PC-3 (cell line): ENCODE measurements at regions of chr13 and their contacts with region 1.

Region 1: DNA sequence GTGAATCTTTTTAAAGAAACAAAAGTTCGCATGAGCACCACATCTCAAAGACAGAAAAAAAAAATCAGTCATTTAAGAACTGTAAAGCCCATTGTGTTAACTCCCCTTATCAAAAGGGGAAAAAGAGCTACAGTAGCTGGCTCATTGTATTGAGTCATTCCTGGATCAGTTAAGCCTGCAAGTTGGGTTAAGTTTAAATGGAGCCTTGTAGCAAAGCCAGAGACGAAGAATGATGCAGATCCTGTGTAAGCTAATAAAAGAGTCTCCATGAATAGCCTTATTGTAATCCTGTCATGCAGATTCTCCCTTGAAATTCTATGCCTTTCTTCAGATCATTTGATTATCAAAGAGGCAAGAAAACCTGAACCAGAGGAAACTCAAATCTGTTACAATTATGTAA is 83.8 kb downstream of the CRYL1 start:
- DNase-seq: peak; percentile 95
- ATAC-seq: peak; percentile 94
- H3K4me3 ChIP-seq: peak overlapping the region; percentile 17; the same call in 1 of the 2 replicates
- H3K27ac ChIP-seq: peak overlapping the region; percentile 95
- H3K4me1 ChIP-seq: peaks cover 31% of the 10 kb centered on the region
- H3K27me3 ChIP-seq: no peaks in the 10 kb centered on the region
- CTCF ChIP-seq: no peak

Region 2: GRCh38 chr13:20418953-20419352 is 22.9 kb before region 1 on chr13:
- CTCF ChIA-PET with region 1: interaction called, 5 read pairs
- POLR2A ChIA-PET with region 1: no interaction called
- intact Hi-C with region 1: loop called (anchors 1 kb)
- DNase-seq: no peak
- ATAC-seq: no peak
- H3K4me3 ChIP-seq: no peak overlapping the region
- H3K27ac ChIP-seq: peak overlapping the region; percentile 86
- H3K4me1 ChIP-seq: peaks cover 21% of the 10 kb centered on the region
- H3K27me3 ChIP-seq: no peaks in the 10 kb centered on the region
- CTCF ChIP-seq: no peak

Region 3: DNA sequence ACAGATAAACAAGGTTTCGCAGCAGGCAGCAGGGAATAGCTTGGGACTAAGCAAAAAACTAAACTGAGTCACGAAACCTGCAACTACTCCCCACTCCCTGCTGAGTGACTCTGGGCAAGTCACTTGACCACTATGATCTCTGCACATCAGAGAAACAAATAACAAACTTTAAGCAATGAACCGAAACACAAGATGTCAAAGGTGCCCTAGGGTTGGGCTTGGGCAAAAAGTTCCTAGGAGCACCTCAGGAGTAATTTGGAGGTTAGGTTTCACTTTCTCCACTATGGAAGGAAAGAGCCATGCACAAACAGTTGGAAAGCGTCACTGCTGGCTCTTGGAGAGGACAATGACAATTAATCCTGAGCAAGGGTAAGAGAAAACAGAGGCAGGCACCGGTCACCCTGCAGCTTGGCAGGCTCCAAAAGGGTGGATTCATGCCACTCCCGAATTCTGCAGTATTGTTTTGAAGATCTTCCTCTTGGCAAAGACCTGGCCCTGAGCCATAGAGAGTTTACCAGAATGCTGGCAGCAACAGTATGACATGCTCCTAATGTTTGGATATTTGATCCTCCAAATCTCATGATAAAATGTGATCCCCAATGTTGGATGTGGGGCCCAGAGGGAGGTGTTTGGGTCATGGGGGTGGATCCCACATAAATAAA is 23.5 kb after region 1 on chr13:
- CTCF ChIA-PET with region 1: no interaction called
- POLR2A ChIA-PET with region 1: no interaction called
- intact Hi-C with region 1: loop called (anchors 2 kb)
- DNase-seq: peak; percentile 75
- ATAC-seq: peak; percentile 80
- H3K4me3 ChIP-seq: peak overlapping the region; percentile 17; the same call in 1 of the 2 replicates
- H3K27ac ChIP-seq: no peak overlapping the region
- H3K4me1 ChIP-seq: peaks cover 23% of the 10 kb centered on the region
- H3K27me3 ChIP-seq: no peaks in the 10 kb centered on the region
- CTCF ChIP-seq: no peak

Region 4: DNA sequence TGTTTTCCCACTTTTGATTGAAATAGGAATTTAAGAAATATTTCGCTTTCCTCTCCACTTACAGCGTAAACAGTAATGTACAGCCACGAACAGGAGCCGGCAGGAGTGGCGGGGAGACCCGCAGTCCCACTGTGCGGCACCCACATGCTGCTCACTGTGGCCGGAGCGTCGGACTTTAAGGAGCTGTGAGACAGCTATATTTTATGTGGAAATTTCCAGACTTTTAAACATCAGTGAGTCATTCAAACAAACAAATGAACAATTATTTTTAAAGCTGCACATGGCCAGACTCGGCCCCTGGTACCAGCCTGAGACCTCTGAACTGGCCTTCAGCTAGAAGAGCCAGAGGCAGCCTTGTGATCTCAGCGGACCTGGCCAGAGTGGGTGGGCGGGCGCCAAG is 31.3 kb after region 1 on chr13:
- CTCF ChIA-PET with region 1: no interaction called
- POLR2A ChIA-PET with region 1: no interaction called
- intact Hi-C with region 1: loop called (anchors 1 kb)
- DNase-seq: peak; percentile 56
- ATAC-seq: peak; percentile 95
- H3K4me3 ChIP-seq: no peak overlapping the region
- H3K27ac ChIP-seq: no peak overlapping the region
- H3K4me1 ChIP-seq: peaks cover 12% of the 10 kb centered on the region
- H3K27me3 ChIP-seq: no peaks in the 10 kb centered on the region
- CTCF ChIP-seq: no peak

Region 5: DNA sequence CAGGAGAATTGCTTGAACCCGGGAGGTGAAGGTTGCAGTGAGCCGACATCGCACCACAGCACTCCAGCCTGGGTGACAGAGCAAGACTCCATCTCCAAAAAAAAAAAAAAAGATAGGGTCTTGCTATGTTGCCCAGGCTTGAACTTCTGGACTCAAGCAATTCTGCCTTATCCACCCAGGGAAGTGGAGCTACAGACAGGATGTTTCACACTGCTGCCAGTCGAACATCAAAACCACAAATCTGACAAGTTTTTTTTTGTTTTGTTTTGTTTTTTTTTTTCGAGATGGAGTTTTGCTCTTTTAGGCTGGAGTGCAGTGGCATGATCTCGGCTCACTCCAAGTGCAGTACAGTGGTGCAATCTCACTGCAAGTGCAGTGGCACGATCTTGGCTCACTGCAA is 449.9 kb after region 1 on chr13:
- CTCF ChIA-PET with region 1: no interaction called
- POLR2A ChIA-PET with region 1: no interaction called
- intact Hi-C with region 1: no loop called
- DNase-seq: no peak
- ATAC-seq: no peak
- H3K4me3 ChIP-seq: no peak overlapping the region
- H3K27ac ChIP-seq: no peak overlapping the region
- H3K4me1 ChIP-seq: no peaks in the 10 kb centered on the region
- H3K27me3 ChIP-seq: no peaks in the 10 kb centered on the region
- CTCF ChIP-seq: no peak